Right ventricle myocardium inferior (tissue), 1 donor: ENCODE measurements at regions of chr6 and their contacts with region 1.

Region 1: DNA sequence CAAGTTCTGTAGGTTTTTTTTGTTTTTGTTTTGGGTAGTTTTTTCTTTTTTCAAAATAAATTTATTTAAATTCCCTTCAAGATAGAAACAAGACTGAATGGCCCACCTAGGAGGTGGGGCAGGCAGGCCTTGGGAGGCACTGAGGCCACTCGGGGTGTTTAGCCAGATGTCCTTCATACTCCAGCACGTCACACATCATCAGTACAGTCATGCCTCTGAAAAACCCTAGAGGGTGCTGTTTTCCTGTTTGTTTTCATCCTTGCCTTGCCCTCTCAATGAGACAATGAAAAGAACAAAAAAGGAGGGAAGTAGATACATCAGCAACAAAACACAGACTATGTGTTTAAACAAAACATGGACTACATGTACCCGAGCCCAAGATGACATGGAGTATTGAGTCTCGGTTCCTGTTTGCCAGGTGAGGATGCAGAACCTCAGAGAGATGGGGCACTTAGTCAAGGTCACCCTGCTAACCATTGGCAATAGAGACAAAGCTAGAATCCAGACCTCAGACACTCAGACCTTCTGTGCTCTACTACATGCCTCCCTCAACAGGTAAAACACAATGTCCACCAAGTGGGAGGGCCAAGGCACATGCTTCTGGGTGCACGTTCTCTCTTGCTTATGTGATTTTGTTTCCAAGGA is 26.8 kb upstream of the CLIC5 start:
- DNase-seq: no peak
- ATAC-seq: peak; percentile 61

Region 2: DNA sequence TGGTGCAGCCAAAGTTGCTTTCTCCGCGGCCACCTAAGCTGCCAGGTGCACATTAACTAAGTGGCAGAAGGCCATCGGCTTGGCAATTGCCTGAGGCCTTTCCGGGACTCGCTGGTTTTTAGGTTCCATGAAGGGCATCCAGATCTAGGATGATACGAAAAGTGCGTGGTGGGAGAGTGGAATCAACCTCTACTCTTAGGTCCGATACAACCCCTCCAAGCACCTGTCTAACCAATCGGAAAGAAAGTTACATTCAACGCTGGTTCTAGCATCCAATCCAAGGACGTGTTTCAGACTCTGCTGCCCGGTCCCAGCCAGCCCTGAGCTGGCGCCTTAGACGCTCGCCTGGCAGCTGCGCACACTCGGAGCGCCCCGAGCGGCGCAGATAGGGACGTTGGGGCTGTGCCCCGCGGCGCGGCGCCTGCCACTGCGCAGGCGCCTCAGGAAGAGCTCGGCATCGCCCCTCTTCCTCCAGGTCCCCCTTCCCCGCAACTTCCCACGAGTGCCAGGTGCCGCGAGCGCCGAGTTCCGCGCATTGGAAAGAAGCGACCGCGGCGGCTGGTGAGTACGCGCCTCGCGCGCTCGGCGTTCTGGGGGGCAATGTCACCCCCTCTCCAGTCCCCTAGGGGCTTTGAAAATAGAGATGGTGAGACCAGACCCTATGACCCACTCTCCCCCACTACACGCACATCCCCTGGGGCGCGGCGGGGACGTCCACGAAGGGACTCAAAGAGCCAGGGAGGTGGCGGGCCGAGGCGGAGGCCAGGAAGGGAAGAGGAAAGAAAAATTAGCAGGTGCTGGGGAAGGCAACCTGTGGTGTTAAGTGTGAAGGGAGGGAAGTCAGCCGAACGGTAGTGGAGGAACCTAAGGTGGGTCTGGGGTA is 87.4 kb after region 1 on chr6 and contains the start of gene ENPP4:
- intact Hi-C with region 1: loop called (anchors 2 kb)
- DNase-seq: peak; percentile 93
- ATAC-seq: peak; percentile 100
- total RNA-seq, gene ENPP4: 20.0 TPM